Esophagus squamous epithelium (tissue), 5 donors: ENCODE measurements at regions of chr15 and their contacts with region 1.

Region 1: DNA sequence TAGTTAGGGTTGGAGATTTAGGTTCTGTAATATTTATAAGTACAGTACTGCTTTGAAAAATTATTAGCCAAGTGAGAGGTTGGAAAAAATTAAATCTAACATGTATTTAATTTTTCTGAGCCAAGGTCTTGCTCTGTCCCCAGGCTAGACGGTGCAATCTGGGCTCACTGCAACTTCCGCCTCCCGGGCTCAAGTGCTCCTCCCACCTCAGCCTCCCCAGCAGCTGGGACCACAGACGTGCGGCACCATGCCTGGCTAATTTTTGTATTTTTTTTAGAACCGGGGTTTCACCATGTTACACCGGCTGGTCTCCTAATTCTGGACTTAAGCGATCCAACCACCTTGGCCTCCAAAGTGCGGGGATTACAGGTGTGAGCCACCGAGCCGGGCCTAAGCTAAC is 1.4 kb downstream of the NIPA2 start:
- DNase-seq: no peak
- H3K4me3 ChIP-seq: peak overlapping the region; percentile 60 to 97 (median 66)
- H3K27ac ChIP-seq: peak overlapping the region; percentile 86 to 99 (median 94)
- H3K4me1 ChIP-seq: peaks cover 8 to 34% (median 11%) of the 10 kb centered on the region in 3 donors
- H3K27me3 ChIP-seq: no peaks in the 10 kb centered on the region
- CTCF ChIP-seq: no peak
- POLR2A ChIP-seq: no peak

Region 2: GRCh38 chr15:22786868-22787698 is 52.7 kb before region 1 on chr15:
- intact Hi-C with region 1: no loop called
- DNase-seq: no peak
- H3K4me3 ChIP-seq: peak overlapping the region; percentile 75 to 93 (median 79)
- H3K27ac ChIP-seq: peak overlapping the region; percentile 87 to 96 (median 92)
- H3K4me1 ChIP-seq: peaks cover 0 to 17% (median 7%) of the 10 kb centered on the region in 3 donors
- H3K27me3 ChIP-seq: no peaks in the 10 kb centered on the region
- CTCF ChIP-seq: no peak
- POLR2A ChIP-seq: no peak

Region 3: GRCh38 chr15:22968366-22968765 is 128.5 kb after region 1 on chr15:
- intact Hi-C with region 1: loop called (anchors 10 kb)
- DNase-seq: no peak
- H3K4me3 ChIP-seq: no peak overlapping the region
- H3K27ac ChIP-seq: peak overlapping the region in 1 of 4 donors; percentile 43
- H3K4me1 ChIP-seq: peaks cover 9 to 42% (median 18%) of the 10 kb centered on the region in 3 donors
- H3K27me3 ChIP-seq: no peaks in the 10 kb centered on the region
- CTCF ChIP-seq: no peak
- POLR2A ChIP-seq: no peak